ENCODE measurements at regions of chr2 and their contacts with region 1.

Region 1: GRCh38 chr2:175855794-175856453 is 146.1 kb downstream of the LNPK start:
- DNase-seq: no peak
- H3K4me3 Mint-ChIP-seq: no peak overlapping the region
- H3K27ac Mint-ChIP-seq: no peak overlapping the region
- H3K4me1 Mint-ChIP-seq: no peaks in the 10 kb centered on the region
- H3K27me3 Mint-ChIP-seq: peaks cover 14% of the 10 kb centered on the region

Region 2: DNA sequence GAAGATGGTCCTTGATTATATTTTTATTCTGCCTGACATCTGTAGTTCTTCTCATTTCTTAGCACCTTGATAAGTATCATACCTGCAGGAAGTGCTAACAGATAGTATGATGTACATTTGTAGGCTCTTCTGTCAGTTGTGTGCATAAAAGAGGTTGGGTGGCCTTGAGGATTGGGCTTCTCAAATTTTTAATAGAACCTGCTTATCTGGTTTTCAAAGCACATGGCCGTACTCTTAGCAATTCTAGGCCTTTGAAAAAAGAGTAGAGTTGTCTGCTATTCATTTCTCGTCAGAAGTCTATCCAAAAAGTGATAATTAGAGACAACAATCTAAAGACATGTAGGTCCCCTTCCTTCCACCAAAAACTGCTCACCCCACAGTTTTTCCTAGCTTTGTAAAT is 459.0 kb after region 1 on chr2:
- CTCF ChIA-PET with region 1: no interaction called
- intact Hi-C with region 1: loop called (anchors 5 kb)
- DNase-seq: no peak
- H3K4me3 Mint-ChIP-seq: no peak overlapping the region
- H3K27ac Mint-ChIP-seq: no peak overlapping the region
- H3K4me1 Mint-ChIP-seq: no peaks in the 10 kb centered on the region
- H3K27me3 Mint-ChIP-seq: no peaks in the 10 kb centered on the region

Measured in activated naive CD4-positive, alpha-beta T cell treated with anti-CD3 and anti-CD28 coated beads for 36 hours (primary cell).